ENCODE measurements at regions of chr9 and their contacts with region 1.

Region 1: GRCh38 chr9:20884985-20885593 is 146.4 kb downstream of the HACD4 start:
- DNase-seq: peak; percentile 9 to 72 (median 48)
- ATAC-seq: peak; percentile 47 to 56 (median 51)
- H3K4me3 ChIP-seq: no peak overlapping the region
- H3K4me3 Mint-ChIP-seq: no peak overlapping the region
- H3K27ac ChIP-seq: no peak overlapping the region
- H3K27ac Mint-ChIP-seq: no peak overlapping the region
- H3K4me1 ChIP-seq: no peaks in the 10 kb centered on the region
- H3K4me1 Mint-ChIP-seq: no peaks in the 10 kb centered on the region
- H3K27me3 ChIP-seq: no peaks in the 10 kb centered on the region
- H3K27me3 Mint-ChIP-seq: no peaks in the 10 kb centered on the region

Region 2: DNA sequence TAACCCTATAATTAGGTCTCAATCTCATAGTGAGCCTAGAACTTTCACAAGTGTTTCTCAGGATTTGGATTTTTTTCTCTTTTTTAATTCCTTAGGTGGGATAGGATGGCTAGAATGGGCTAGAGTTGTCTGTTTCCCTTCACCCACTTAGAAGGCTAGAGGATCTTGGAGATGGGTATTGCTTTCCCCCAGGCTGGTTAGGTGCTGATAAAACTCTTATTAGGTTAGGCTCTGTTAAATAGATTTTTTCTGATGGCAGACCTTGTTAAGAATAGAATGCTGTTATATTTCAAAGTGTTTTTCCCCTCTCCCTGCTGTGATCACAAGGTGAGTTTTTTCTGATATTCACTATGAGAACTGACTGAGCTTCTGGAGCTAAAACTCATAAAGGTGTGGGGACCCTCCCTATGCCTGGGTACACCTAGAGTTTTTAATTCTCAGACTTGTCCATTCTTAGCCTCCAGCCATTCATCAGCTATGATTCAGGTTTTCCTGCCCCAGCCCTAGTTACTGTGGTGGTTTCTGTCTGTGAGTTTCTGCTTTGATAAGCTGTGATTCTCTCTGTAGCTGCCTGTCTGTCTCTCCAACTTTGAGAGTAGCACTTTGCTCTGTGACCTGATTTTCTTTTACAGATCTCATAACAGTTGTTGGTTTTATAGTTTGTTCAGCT is 13.9 kb after region 1 on chr9:
- CTCF ChIA-PET with region 1: interaction called, 6 to 10 read pairs
- POLR2A ChIA-PET with region 1: no interaction called
- DNase-seq: no peak
- ATAC-seq: no peak
- H3K4me3 ChIP-seq: no peak overlapping the region
- H3K4me3 Mint-ChIP-seq: no peak overlapping the region
- H3K27ac ChIP-seq: no peak overlapping the region
- H3K27ac Mint-ChIP-seq: no peak overlapping the region
- H3K4me1 ChIP-seq: no peaks in the 10 kb centered on the region
- H3K4me1 Mint-ChIP-seq: no peaks in the 10 kb centered on the region
- H3K27me3 ChIP-seq: no peaks in the 10 kb centered on the region
- H3K27me3 Mint-ChIP-seq: no peaks in the 10 kb centered on the region

Region 3: DNA sequence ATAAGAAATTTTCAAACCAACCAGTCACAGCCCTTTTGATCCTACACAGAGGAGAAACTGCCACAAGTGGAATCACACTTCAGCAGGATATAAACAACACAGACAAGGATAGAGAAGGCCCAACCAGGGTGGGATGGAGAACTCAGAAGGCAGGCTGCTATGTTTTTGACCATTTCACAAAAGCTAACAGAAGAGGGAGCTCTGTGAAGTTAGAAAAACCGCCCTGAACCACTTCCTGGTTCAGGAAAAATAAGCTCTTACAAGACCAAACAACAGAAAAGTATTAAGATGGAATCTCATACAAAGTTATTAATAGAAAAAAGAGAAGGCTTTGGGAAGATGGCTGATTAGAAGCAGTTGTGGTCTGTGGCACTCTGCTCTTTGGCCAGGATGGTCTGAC is 193.6 kb after region 1 on chr9:
- CTCF ChIA-PET with region 1: interaction called in 1 of 2 experiments, 3 read pairs
- POLR2A ChIA-PET with region 1: interaction called in 1 of 2 experiments, 10 read pairs
- DNase-seq: peak in 1 of 35 experiments; percentile 45
- ATAC-seq: peak in 3 of 4 experiments; percentile 27 to 59 (median 55)
- H3K4me3 ChIP-seq: no peak overlapping the region
- H3K4me3 Mint-ChIP-seq: no peak overlapping the region
- H3K27ac ChIP-seq: no peak overlapping the region
- H3K27ac Mint-ChIP-seq: peak overlapping the region in 1 of 2 donors; percentile 35
- H3K4me1 ChIP-seq: peaks cover 9 to 24% of the 10 kb centered on the region in 2 experiments
- H3K4me1 Mint-ChIP-seq: peaks cover 27 to 38% (median 32%) of the 10 kb centered on the region in 3 donors
- H3K27me3 ChIP-seq: no peaks in the 10 kb centered on the region
- H3K27me3 Mint-ChIP-seq: no peaks in the 10 kb centered on the region